ENCODE measurements at regions of chr15 and their contacts with region 1.

Region 1: GRCh38 chr15:45198337-45199135 is 10.8 kb upstream of the SHF start:
- DNase-seq: peak; percentile 99
- H3K4me3 ChIP-seq: peak overlapping the region; percentile 56 to 82 (median 68)
- H3K27ac ChIP-seq: peak overlapping the region; percentile 43
- H3K4me1 ChIP-seq: peaks cover 8% of the 10 kb centered on the region
- H3K27me3 ChIP-seq: peaks cover 7% of the 10 kb centered on the region in 2 experiments
- CTCF ChIP-seq: peak; percentile 83 to 84
- POLR2A ChIP-seq: peak; percentile 83

Region 2: DNA sequence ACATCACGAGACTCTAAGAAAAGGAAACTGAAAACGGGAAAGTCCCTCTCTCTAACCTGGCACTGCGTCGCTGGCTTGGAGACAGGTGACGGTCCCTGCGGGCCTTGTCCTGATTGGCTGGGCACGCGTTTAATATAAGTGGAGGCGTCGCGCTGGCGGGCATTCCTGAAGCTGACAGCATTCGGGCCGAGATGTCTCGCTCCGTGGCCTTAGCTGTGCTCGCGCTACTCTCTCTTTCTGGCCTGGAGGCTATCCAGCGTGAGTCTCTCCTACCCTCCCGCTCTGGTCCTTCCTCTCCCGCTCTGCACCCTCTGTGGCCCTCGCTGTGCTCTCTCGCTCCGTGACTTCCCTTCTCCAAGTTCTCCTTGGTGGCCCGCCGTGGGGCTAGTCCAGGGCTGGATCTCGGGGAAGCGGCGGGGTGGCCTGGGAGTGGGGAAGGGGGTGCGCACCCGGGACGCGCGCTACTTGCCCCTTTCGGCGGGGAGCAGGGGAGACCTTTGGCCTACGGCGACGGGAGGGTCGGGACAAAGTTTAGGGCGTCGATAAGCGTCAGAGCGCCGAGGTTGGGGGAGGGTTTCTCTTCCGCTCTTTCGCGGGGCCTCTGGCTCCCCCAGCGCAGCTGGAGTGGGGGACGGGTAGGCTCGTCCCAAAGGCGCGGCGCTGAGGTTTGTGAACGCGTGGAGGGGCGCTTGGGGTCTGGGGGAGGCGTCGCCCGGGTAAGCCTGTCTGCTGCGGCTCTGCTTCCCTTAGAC is 487.0 kb before region 1 on chr15 and contains the start of gene B2M:
- CTCF ChIA-PET with region 1: no interaction called
- POLR2A ChIA-PET with region 1: no interaction called
- dilution Hi-C with region 1: no loop called
- intact Hi-C with region 1: loop called (anchors 10 kb)
- DNase-seq: peak; percentile 98
- H3K4me3 ChIP-seq: peak within 1 kb of the TSS; percentile 79 to 96 (median 87)
- H3K27ac ChIP-seq: peak within 1 kb of the TSS; percentile 92
- H3K4me1 ChIP-seq: peaks cover 4% of the 10 kb centered on the region
- H3K27me3 ChIP-seq: no peaks in the 10 kb centered on the region
- CTCF ChIP-seq: no peak
- POLR2A ChIP-seq: peak; percentile 100
- total RNA-seq, gene B2M: 725 and 985 TPM in 2 replicates

Region 3: DNA sequence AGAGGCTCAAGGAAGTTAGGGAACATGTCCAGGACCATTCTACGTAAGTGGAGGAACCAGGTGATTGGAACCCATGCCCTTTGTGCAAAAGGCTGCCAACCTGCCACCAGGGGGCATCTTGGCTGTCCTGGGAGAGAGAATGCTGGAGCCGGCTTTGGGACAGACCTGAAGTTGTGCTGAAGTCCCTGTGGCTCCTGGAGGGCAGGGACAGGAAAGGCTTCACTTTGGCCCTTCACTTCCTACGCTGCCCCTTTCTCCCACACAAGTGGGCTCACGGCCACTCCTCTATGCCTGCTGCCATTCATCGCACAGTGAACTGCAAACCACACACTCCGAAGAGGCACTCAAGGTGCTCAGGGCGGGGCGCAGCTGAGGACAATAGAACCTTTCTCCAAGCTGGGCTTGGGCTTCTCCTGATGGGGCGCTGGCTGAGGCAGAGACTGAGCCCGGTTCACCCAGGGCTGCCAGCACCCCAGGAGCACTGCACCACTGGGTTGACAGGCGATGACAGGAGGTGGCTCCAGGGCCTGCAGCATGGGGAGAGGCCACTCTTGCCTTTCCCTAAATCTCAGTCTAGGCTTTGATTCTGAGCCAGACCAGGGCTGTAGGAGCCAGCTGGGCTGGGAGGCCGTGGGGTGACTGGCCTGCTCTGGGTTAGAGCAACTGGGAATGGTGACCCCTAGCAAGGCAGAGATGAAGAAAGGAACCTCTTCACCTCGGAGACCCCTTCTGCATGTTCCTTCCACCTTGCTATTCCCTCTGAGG is 19.1 kb before region 1 on chr15:
- CTCF ChIA-PET with region 1: interaction called, 5 read pairs
- POLR2A ChIA-PET with region 1: no interaction called
- dilution Hi-C with region 1: no loop called
- intact Hi-C with region 1: loop called (anchors 1 kb)
- DNase-seq: no peak
- H3K4me3 ChIP-seq: no peak overlapping the region
- H3K27ac ChIP-seq: no peak overlapping the region
- H3K4me1 ChIP-seq: no peaks in the 10 kb centered on the region
- H3K27me3 ChIP-seq: no peaks in the 10 kb centered on the region
- CTCF ChIP-seq: peak; percentile 43 to 63
- POLR2A ChIP-seq: no peak

Region 4: GRCh38 chr15:45242289-45242688 is 43.8 kb after region 1 on chr15:
- CTCF ChIA-PET with region 1: no interaction called
- POLR2A ChIA-PET with region 1: no interaction called
- dilution Hi-C with region 1: no loop called
- intact Hi-C with region 1: no loop called
- DNase-seq: no peak
- H3K4me3 ChIP-seq: no peak overlapping the region
- H3K27ac ChIP-seq: no peak overlapping the region
- H3K4me1 ChIP-seq: no peaks in the 10 kb centered on the region
- H3K27me3 ChIP-seq: no peaks in the 10 kb centered on the region
- CTCF ChIP-seq: no peak
- POLR2A ChIP-seq: no peak

Region 5: GRCh38 chr15:45279024-45279698 is 80.6 kb after region 1 on chr15:
- CTCF ChIA-PET with region 1: interaction called, 3 read pairs
- POLR2A ChIA-PET with region 1: no interaction called
- dilution Hi-C with region 1: no loop called
- intact Hi-C with region 1: loop called (anchors 1 kb)
- DNase-seq: peak; percentile 96
- H3K4me3 ChIP-seq: peak overlapping the region; percentile 10 to 60 (median 46)
- H3K27ac ChIP-seq: peak overlapping the region; percentile 32
- H3K4me1 ChIP-seq: peaks cover 8% of the 10 kb centered on the region
- H3K27me3 ChIP-seq: no peaks in the 10 kb centered on the region
- CTCF ChIP-seq: no peak
- POLR2A ChIP-seq: peak; percentile 79

Region 6: DNA sequence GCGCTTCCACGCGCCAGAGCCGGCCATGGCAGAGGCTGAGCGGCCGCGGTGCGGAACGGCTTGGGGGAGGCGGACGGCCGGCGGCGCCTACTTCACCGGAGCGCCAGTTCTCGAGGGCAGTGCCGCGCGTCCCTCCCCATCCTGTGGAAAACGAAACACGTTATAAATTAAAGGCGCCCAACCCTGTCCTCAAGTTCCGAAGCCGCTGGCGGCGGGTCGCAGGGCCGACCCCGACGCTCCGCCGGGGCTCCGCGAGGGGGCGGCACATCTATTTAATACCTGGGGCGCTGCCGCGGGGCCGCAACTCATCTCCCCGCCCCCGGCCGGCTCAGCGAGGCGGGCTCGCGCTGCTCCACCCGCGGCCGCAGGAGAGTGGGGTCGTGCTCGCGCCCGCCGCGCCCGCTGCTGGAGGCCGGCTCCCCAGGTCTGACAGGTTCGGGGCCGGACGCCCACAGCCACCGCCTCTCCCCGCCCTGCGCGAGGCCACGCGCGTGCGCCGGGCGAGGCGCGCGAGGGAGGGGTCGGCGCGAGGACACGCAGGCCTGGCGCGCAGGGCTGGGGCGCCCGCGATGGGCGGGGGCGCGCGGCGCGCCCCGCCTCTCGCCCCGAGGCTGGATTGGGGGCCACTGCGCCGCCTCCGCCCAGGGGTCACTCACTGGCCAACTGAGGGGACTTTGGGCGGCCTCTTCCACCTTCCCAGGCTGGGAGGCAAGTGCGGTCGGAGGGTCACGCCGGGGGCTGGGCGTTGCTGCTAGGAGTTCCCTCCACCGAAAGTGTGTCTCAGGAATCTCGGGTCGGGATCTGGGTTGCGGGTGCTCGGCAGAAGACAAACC is 324.0 kb after region 1 on chr15 and contains the start of gene SLC30A4:
- CTCF ChIA-PET with region 1: no interaction called
- POLR2A ChIA-PET with region 1: no interaction called
- dilution Hi-C with region 1: no loop called
- intact Hi-C with region 1: loop called (anchors 2 kb)
- DNase-seq: peak; percentile 68
- H3K4me3 ChIP-seq: peak within 1 kb of the TSS; percentile 53 to 90 (median 60)
- H3K27ac ChIP-seq: no peak within 1 kb of the TSS
- H3K4me1 ChIP-seq: peaks cover 9% of the 10 kb centered on the region
- H3K27me3 ChIP-seq: peaks cover 0 to 3% of the 10 kb centered on the region in 2 experiments
- CTCF ChIP-seq: peak; percentile 12 to 49
- POLR2A ChIP-seq: no peak
- total RNA-seq, gene SLC30A4: 3.8 and 3.9 TPM in 2 replicates

Region 7: GRCh38 chr15:45611305-45611704 is 412.8 kb after region 1 on chr15:
- CTCF ChIA-PET with region 1: interaction called, 3 read pairs
- POLR2A ChIA-PET with region 1: no interaction called
- dilution Hi-C with region 1: no loop called
- intact Hi-C with region 1: loop called (anchors 10 kb)
- DNase-seq: peak; percentile 33
- H3K4me3 ChIP-seq: no peak overlapping the region
- H3K27ac ChIP-seq: no peak overlapping the region
- H3K4me1 ChIP-seq: peaks cover 8% of the 10 kb centered on the region
- H3K27me3 ChIP-seq: no peaks in the 10 kb centered on the region
- CTCF ChIP-seq: peak; percentile 20 to 24
- POLR2A ChIP-seq: no peak

Measured in endothelial cell of umbilical vein (primary cell).